K562 (cell line): ENCODE measurements at regions of chr1 and their contacts with region 1.

Region 1: GRCh38 chr1:182877842-182878241 is 38.7 kb downstream of the DHX9 start:
- DNase-seq: no peak
- ATAC-seq: no peak
- H3K4me3 ChIP-seq: no peak overlapping the region
- H3K27ac ChIP-seq: no peak overlapping the region
- H3K4me1 ChIP-seq: no peaks in the 10 kb centered on the region
- H3K27me3 ChIP-seq: no peaks in the 10 kb centered on the region
- CTCF ChIP-seq: no peak
- EP300 ChIP-seq: no peak
- POLR2A ChIP-seq: no peak
- RAD21 ChIP-seq: no peak

Region 2: DNA sequence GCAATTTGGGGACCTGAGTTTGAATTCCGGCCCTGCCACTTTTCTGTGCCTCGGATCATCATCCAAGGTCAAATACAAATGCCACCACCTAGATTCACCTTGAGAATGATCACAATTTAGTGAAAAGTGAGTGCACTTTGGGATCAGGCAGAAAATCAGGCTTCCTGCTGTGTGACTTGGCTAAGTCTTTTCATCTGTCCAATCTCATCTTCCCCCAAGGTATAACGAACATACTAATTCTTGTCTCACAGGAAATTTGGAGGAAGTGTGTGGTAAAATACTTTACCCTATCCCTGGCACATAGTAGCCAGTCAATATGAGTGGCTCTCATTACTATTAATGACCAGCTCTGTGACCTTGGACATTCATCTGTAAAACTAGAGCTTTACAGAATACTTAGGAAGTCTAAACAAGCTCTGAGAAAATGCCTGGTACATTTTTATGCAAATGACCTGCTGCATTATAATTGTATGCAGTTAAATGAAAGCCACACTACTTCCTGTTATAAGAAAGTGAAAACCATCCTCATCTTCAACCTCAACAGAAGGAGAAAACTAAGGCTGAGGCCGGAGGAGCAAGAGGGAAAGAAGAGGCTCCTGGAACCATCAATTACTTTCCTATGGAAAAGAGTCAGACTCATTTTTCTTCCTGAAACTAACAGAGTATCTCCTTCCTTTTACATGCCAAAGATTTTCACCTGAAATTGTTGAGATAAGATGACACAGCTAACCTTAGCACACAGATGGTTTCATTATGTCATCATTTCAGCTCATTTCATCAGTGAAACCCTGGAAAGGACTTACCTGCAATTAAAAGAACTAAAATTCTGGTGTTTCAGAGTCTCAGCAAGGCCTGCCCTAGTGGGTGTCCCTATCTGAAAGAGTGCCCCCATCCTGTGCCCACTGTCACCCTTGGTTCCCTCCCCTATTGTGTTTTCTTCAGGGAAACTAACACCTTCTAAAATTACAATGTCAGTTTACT is 160.8 kb before region 1 on chr1:
- CTCF ChIA-PET with region 1: no interaction called
- POLR2A ChIA-PET with region 1: no interaction called
- in situ Hi-C with region 1: no loop called
- intact Hi-C with region 1: no loop called
- DNase-seq: no peak
- ATAC-seq: no peak
- H3K4me3 ChIP-seq: no peak overlapping the region
- H3K27ac ChIP-seq: no peak overlapping the region
- H3K4me1 ChIP-seq: no peaks in the 10 kb centered on the region
- H3K27me3 ChIP-seq: peaks cover 7 to 8% of the 10 kb centered on the region in 2 experiments; a peak in 4 of 5 replicates
- CTCF ChIP-seq: no peak
- EP300 ChIP-seq: no peak
- POLR2A ChIP-seq: no peak
- RAD21 ChIP-seq: no peak

Region 3: GRCh38 chr1:182861994-182862393 is 15.8 kb before region 1 on chr1:
- CTCF ChIA-PET with region 1: no interaction called
- POLR2A ChIA-PET with region 1: interaction called, 4 read pairs
- in situ Hi-C with region 1: no loop called
- intact Hi-C with region 1: loop called (anchors 2 kb)
- DNase-seq: no peak
- ATAC-seq: no peak
- H3K4me3 ChIP-seq: no peak overlapping the region
- H3K27ac ChIP-seq: no peak overlapping the region
- H3K4me1 ChIP-seq: no peaks in the 10 kb centered on the region
- H3K27me3 ChIP-seq: no peaks in the 10 kb centered on the region
- CTCF ChIP-seq: no peak
- EP300 ChIP-seq: no peak
- POLR2A ChIP-seq: no peak
- RAD21 ChIP-seq: no peak